ENCODE measurements at regions of chr5 and their contacts with region 1.

Region 1: DNA sequence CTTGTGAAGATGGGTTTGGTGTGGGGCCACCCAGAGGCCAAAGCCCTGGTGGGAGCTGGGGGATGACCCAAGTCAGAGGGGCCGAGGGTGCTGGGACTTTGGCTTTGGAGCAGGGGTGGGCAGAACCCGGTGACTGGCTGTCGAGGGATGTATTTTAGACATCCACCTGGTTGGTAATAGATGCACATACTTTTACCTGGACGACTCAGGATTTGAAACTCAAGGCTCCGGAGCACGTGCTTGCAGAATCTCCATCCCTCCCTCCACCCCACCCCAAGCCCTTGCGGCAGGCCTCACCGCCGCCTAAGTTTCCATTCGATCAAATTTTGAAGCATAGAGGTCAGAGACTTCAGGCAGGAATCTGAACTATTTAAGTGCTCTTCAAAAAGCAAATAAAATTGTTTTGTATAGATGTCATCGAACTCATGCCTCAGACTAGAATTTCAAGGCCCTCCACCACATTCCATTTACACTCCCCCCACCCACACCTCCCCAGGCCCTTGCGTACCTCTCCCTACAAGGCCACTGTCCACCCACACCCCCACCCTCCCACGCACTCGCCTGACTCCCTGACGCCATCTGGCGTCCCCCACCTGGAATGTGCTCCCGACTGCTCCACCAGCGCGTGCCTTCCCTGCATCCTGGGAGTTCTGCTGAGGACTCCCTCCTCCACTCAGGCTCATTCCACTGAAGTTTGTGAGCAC is 56.6 kb upstream of the RPL26L1 start:
- DNase-seq: peak; percentile 99
- ATAC-seq: peak; percentile 74
- H3K4me3 ChIP-seq: no peak overlapping the region
- H3K27ac ChIP-seq: peak overlapping the region; percentile 97
- H3K4me1 ChIP-seq: peaks cover 57% of the 10 kb centered on the region
- H3K27me3 ChIP-seq: no peaks in the 10 kb centered on the region
- CTCF ChIP-seq: peak; percentile 64
- POLR2A ChIP-seq: no peak; the same call in 1 of the 2 replicates
- RAD21 ChIP-seq: peak; percentile 54

Region 2: GRCh38 chr5:171521219-171521633 is 1381.4 kb before region 1 on chr5:
- CTCF ChIA-PET with region 1: no interaction called
- POLR2A ChIA-PET with region 1: no interaction called
- dilution Hi-C with region 1: no loop called
- in situ Hi-C with region 1: no loop called
- intact Hi-C with region 1: no loop called
- DNase-seq: peak; percentile 92
- ATAC-seq: peak; percentile 95
- H3K4me3 ChIP-seq: no peak overlapping the region
- H3K27ac ChIP-seq: peak overlapping the region; percentile 81
- H3K4me1 ChIP-seq: peaks cover 23% of the 10 kb centered on the region
- H3K27me3 ChIP-seq: peaks cover 3% of the 10 kb centered on the region
- CTCF ChIP-seq: peak; percentile 20; the same call in 1 of the 2 replicates
- POLR2A ChIP-seq: no peak
- RAD21 ChIP-seq: peak; percentile 44

Region 3: GRCh38 chr5:172603251-172603806 is 299.3 kb before region 1 on chr5:
- CTCF ChIA-PET with region 1: no interaction called
- POLR2A ChIA-PET with region 1: no interaction called
- dilution Hi-C with region 1: no loop called
- in situ Hi-C with region 1: no loop called
- intact Hi-C with region 1: no loop called
- DNase-seq: peak; percentile 51
- ATAC-seq: peak; percentile 79
- H3K4me3 ChIP-seq: no peak overlapping the region
- H3K27ac ChIP-seq: peak overlapping the region; percentile 17; the same call in 1 of the 2 replicates
- H3K4me1 ChIP-seq: peaks cover 5% of the 10 kb centered on the region; the same call in 1 of the 2 replicates
- H3K27me3 ChIP-seq: peaks cover 10% of the 10 kb centered on the region
- CTCF ChIP-seq: no peak
- POLR2A ChIP-seq: no peak
- RAD21 ChIP-seq: no peak

Region 4: GRCh38 chr5:172764849-172765765 is 137.5 kb before region 1 on chr5:
- CTCF ChIA-PET with region 1: interaction called, 5 read pairs
- POLR2A ChIA-PET with region 1: interaction called, 3 read pairs
- dilution Hi-C with region 1: no loop called
- in situ Hi-C with region 1: loop called (anchors 10 kb)
- intact Hi-C with region 1: loop called (anchors 1 kb)
- DNase-seq: peak; percentile 99
- ATAC-seq: peak; percentile 51
- H3K4me3 ChIP-seq: peak overlapping the region; percentile 12
- H3K27ac ChIP-seq: peak overlapping the region; percentile 54
- H3K4me1 ChIP-seq: peaks cover 3% of the 10 kb centered on the region
- H3K27me3 ChIP-seq: no peaks in the 10 kb centered on the region
- CTCF ChIP-seq: no peak
- POLR2A ChIP-seq: no peak
- RAD21 ChIP-seq: no peak

Region 5: DNA sequence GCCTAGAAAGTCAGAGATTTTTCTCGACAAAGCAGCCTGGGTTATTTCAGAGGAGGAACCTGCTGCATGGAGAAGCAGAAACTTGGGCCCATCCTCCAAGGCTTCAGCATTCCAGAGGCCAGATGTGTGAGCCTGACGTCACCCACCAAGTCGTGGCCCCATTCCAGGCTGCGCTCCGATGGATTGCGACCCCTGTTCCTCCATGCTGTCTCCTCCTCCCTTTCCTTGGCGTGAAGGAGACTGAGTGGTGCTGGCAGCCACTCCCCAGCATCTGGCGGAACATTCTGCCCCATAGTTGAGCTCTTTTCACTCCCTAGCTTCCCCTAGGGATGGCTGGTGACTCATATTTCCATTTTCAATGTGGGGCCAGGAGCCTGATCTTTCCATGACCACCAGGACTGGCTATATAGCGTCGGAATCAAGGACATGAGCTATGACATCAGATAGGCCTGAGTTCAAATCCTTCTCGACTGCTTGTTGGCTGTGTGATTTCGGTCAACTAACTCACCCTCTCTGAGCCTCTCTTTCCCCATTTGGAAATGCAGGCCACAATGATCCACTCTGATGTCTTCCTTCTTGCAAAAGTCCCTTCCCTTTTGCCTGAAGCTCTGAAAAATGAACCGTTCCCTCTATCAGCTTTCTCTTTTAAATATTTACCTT is 107.2 kb before region 1 on chr5:
- CTCF ChIA-PET with region 1: no interaction called
- POLR2A ChIA-PET with region 1: no interaction called
- dilution Hi-C with region 1: no loop called
- in situ Hi-C with region 1: no loop called
- intact Hi-C with region 1: loop called (anchors 1 kb)
- DNase-seq: peak; percentile 99
- ATAC-seq: peak; percentile 53
- H3K4me3 ChIP-seq: no peak overlapping the region
- H3K27ac ChIP-seq: peak overlapping the region; percentile 53
- H3K4me1 ChIP-seq: peaks cover 35% of the 10 kb centered on the region
- H3K27me3 ChIP-seq: no peaks in the 10 kb centered on the region
- CTCF ChIP-seq: 0 out of 2 replicates have a peak, but pooled peaks have one; percentile 4
- POLR2A ChIP-seq: no peak; the same call in 1 of the 2 replicates
- RAD21 ChIP-seq: no peak; the same call in 1 of the 2 replicates

Region 6: DNA sequence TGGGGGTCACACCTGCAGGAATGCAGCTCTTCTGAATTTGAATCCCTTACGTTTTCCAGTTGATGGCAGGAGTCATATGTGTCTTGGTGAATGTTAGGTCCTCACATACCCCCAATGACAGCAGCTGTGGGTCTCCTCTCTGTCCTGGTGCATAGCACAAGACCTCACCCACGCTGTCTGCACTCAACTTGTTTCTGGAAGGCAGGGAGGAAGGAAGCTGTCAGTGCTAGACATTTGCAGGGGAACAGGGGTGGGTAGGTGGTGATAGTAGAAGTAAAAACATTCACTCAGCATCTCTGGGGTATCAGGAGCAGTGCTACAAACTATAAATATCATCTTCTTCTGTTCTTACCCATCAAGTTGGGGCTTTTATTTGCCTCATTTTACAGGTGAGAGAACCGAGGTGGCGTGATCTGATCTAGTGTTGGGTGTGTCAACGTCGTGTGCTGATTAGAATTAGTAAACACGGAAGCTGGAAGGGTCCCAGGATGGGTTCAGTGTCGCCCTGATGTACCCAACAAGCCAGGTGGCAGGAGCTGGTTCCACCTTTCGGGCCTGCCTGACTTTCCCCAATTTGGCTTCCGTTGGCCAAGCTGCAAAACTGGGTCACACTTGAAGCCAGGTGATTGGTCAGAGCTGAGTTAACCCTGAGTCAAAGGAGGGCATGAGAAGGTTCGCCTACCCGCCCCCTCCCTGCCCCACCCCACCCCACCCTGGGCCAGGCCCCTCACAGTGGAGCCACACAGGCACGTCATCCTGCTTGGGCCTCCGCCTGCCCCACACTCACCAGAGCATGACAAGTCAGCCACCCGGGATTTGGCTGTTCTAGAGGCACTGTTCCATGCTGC is 52.8 kb before region 1 on chr5:
- CTCF ChIA-PET with region 1: no interaction called
- POLR2A ChIA-PET with region 1: no interaction called
- dilution Hi-C with region 1: no loop called
- in situ Hi-C with region 1: no loop called
- intact Hi-C with region 1: loop called (anchors 5 kb)
- DNase-seq: no peak
- ATAC-seq: no peak
- H3K4me3 ChIP-seq: no peak overlapping the region
- H3K27ac ChIP-seq: no peak overlapping the region
- H3K4me1 ChIP-seq: peaks cover 31% of the 10 kb centered on the region
- H3K27me3 ChIP-seq: no peaks in the 10 kb centered on the region
- CTCF ChIP-seq: no peak
- POLR2A ChIP-seq: no peak
- RAD21 ChIP-seq: no peak

Region 7: GRCh38 chr5:172868924-172869591 is 33.6 kb before region 1 on chr5:
- CTCF ChIA-PET with region 1: interaction called, 3 read pairs
- POLR2A ChIA-PET with region 1: interaction called, 4 read pairs
- dilution Hi-C with region 1: no loop called
- in situ Hi-C with region 1: no loop called
- intact Hi-C with region 1: loop called (anchors 2 kb)
- DNase-seq: peak; percentile 96
- ATAC-seq: peak; percentile 62
- H3K4me3 ChIP-seq: no peak overlapping the region
- H3K27ac ChIP-seq: peak overlapping the region; percentile 78
- H3K4me1 ChIP-seq: peaks cover 52% of the 10 kb centered on the region
- H3K27me3 ChIP-seq: no peaks in the 10 kb centered on the region
- CTCF ChIP-seq: peak; percentile 66
- POLR2A ChIP-seq: peak; percentile 76
- RAD21 ChIP-seq: peak; percentile 68

Region 8: GRCh38 chr5:173114536-173114935 is 211.9 kb after region 1 on chr5:
- CTCF ChIA-PET with region 1: no interaction called
- POLR2A ChIA-PET with region 1: no interaction called
- dilution Hi-C with region 1: no loop called
- in situ Hi-C with region 1: no loop called
- intact Hi-C with region 1: no loop called
- DNase-seq: no peak
- ATAC-seq: no peak
- H3K4me3 ChIP-seq: no peak overlapping the region
- H3K27ac ChIP-seq: no peak overlapping the region
- H3K4me1 ChIP-seq: no peaks in the 10 kb centered on the region
- H3K27me3 ChIP-seq: no peaks in the 10 kb centered on the region
- CTCF ChIP-seq: no peak
- POLR2A ChIP-seq: no peak
- RAD21 ChIP-seq: no peak

Measured in IMR-90 (cell line).